ENCODE measurements at regions of chr11 and their contacts with region 1.

Region 1: GRCh38 chr11:65013692-65014145 is 241 bp upstream of the ARL2 start:
- DNase-seq: peak; percentile 91
- ATAC-seq: peak; percentile 90
- H3K4me3 Mint-ChIP-seq: peak overlapping the region; percentile 79
- H3K27ac Mint-ChIP-seq: peak overlapping the region; percentile 99
- H3K4me1 Mint-ChIP-seq: peaks cover 23% of the 10 kb centered on the region
- H3K27me3 Mint-ChIP-seq: no peaks in the 10 kb centered on the region
- CTCF ChIP-seq: peak; percentile 77

Region 2: GRCh38 chr11:64846998-64847666 is 166.6 kb before region 1 on chr11:
- CTCF ChIA-PET with region 1: interaction called, 6 read pairs
- POLR2A ChIA-PET with region 1: interaction called, 3 read pairs
- intact Hi-C with region 1: loop called (anchors 10 kb)
- DNase-seq: peak; percentile 94
- ATAC-seq: peak; percentile 63
- H3K4me3 Mint-ChIP-seq: no peak overlapping the region
- H3K27ac Mint-ChIP-seq: peak overlapping the region; percentile 30
- H3K4me1 Mint-ChIP-seq: peaks cover 58% of the 10 kb centered on the region
- H3K27me3 Mint-ChIP-seq: no peaks in the 10 kb centered on the region
- CTCF ChIP-seq: peak; percentile 94

Region 3: DNA sequence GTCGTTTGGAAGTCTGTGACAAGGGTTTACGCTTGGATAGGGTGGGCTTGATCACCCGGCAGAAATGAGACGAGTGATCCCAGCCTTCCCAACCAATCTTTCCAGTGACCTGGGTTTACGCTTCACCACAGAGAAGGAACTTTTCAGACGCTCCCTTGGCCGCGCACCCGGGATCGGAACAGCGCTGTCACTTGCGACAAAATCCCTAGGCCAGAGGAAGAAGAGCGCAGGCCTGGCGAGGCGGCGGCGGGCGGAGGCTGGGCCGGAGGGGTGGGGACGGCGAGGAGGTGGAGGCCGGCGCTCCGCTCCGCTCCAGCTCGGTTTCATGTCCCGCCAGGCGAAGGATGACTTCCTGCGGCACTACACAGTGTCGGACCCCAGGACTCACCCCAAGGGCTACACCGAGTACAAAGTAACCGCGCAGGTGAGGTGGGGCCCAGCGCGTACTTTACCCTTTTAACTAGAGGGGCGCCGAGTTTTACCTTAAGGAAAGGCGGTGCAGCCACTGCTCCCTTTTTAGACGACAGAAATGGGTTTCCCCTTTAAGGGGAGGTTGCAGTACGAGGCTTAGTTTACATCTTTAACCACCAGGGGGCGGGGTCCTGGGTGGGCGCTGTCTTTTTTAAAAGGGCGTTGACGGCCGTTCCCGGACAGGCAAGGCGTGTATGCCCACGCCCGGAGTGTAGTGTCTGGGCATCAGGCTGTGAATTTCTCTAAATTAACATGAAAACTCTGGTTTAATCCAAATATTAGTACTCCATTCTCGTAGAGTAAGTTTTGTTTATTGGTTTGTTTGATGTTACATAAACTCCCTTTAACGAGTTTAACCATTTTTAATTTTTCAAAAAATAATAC is 13.7 kb after region 1 on chr11 and contains the start of gene SNX15:
- CTCF ChIA-PET with region 1: interaction called, 37 read pairs
- POLR2A ChIA-PET with region 1: interaction called, 38 read pairs
- intact Hi-C with region 1: no loop called
- DNase-seq: peak; percentile 96
- ATAC-seq: peak; percentile 94
- H3K4me3 Mint-ChIP-seq: peak within 1 kb of the TSS; percentile 74
- H3K27ac Mint-ChIP-seq: peak within 1 kb of the TSS; percentile 81
- H3K4me1 Mint-ChIP-seq: peaks cover 13% of the 10 kb centered on the region
- H3K27me3 Mint-ChIP-seq: no peaks in the 10 kb centered on the region
- CTCF ChIP-seq: peak; percentile 80
- total RNA-seq, gene SNX15: 4.7 to 5.7 TPM

Region 4: GRCh38 chr11:65083834-65084597 is 70.3 kb after region 1 on chr11 and contains the starts of genes CDCA5 and ZFPL1:
- CTCF ChIA-PET with region 1: interaction called, 10 read pairs
- POLR2A ChIA-PET with region 1: interaction called, 7 read pairs
- intact Hi-C with region 1: no loop called
- DNase-seq: peak; percentile 96
- ATAC-seq: peak; percentile 82
- H3K4me3 Mint-ChIP-seq: peak within 1 kb of the TSS; percentile 99
- H3K27ac Mint-ChIP-seq: peak within 1 kb of the TSS; percentile 98
- H3K4me1 Mint-ChIP-seq: peaks cover 35% of the 10 kb centered on the region
- H3K27me3 Mint-ChIP-seq: no peaks in the 10 kb centered on the region
- CTCF ChIP-seq: no peak
- total RNA-seq, gene CDCA5: 112 TPM
- total RNA-seq, gene ZFPL1: 27.1 to 28.2 TPM

Region 5: GRCh38 chr11:65117216-65118096 is 103.7 kb after region 1 on chr11 and contains the start of gene ZNHIT2:
- CTCF ChIA-PET with region 1: interaction called, 45 read pairs
- POLR2A ChIA-PET with region 1: interaction called, 10 read pairs
- intact Hi-C with region 1: loop called (anchors 10 kb)
- DNase-seq: peak; percentile 100
- ATAC-seq: peak; percentile 75
- H3K4me3 Mint-ChIP-seq: peak within 1 kb of the TSS; percentile 87
- H3K27ac Mint-ChIP-seq: peak within 1 kb of the TSS; percentile 95
- H3K4me1 Mint-ChIP-seq: peaks cover 53% of the 10 kb centered on the region
- H3K27me3 Mint-ChIP-seq: no peaks in the 10 kb centered on the region
- CTCF ChIP-seq: peak; percentile 79
- total RNA-seq, gene ZNHIT2: 11.5 to 12.7 TPM

Region 6: GRCh38 chr11:65189191-65189590 is 175.5 kb after region 1 on chr11:
- CTCF ChIA-PET with region 1: no interaction called
- POLR2A ChIA-PET with region 1: no interaction called
- intact Hi-C with region 1: no loop called
- DNase-seq: no peak
- ATAC-seq: no peak
- H3K4me3 Mint-ChIP-seq: no peak overlapping the region
- H3K27ac Mint-ChIP-seq: no peak overlapping the region
- H3K4me1 Mint-ChIP-seq: peaks cover 4% of the 10 kb centered on the region
- H3K27me3 Mint-ChIP-seq: no peaks in the 10 kb centered on the region
- CTCF ChIP-seq: no peak

Measured in activated CD8-positive, alpha-beta T cell treated with anti-CD3 and anti-CD28 coated beads for 36 hours (primary cell).